A673 (cell line): ENCODE measurements at regions of chr15 and their contacts with region 1.

Region 1: GRCh38 chr15:52528991-52529926 is 579 bp upstream of the MYO5A start:
- DNase-seq: peak; percentile 74
- H3K4me3 ChIP-seq: peak overlapping the region; percentile 67
- H3K27ac ChIP-seq: no peak overlapping the region
- H3K4me1 ChIP-seq: peaks cover 4% of the 10 kb centered on the region
- H3K27me3 ChIP-seq: peaks cover 33% of the 10 kb centered on the region
- CTCF ChIP-seq: no peak

Region 2: DNA sequence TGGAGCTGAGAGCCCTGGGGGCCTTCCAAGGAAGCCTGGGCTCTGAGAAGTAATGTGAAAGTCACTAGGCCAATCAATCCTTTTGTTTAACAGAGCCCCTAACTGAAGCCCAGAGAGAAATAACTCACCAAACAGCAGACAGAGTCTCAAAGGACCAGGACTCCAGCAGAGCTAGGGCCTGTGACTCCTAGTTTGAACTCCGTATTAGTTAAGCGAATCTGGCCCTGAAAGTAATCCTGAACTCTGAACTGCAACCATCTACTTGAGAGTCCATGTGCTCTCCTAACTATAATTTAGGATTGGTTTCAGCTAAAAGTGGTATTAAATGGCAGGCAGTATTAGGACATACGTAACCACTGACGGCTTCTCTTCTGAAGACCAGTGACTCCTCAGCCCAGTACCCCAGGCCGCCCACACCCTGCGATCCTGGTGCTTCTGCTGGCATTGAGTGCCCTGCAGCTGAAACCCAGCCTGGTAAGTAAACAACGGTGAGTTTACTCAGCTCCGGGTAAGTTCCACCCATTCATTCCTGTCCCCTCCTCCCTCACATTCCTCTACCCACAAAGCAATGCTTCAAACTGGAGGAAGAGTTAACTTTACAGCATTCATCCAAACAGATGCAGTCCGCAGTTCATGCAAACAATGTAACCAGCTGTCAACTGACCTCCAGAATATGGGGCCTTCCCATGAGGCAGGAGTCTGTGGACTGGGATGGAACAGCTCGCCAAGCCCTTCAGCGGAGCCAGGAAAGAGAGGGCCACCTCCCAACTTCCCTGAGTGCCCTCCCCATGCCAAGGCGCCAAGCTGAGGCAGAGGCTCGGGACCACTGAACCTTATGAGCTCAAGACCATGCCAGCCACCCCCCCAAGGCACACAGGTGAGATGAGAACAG is 241.0 kb before region 1 on chr15:
- CTCF ChIA-PET with region 1: no interaction called
- POLR2A ChIA-PET with region 1: no interaction called
- intact Hi-C with region 1: no loop called
- DNase-seq: no peak
- H3K4me3 ChIP-seq: no peak overlapping the region
- H3K27ac ChIP-seq: no peak overlapping the region
- H3K4me1 ChIP-seq: no peaks in the 10 kb centered on the region
- H3K27me3 ChIP-seq: peaks cover 9% of the 10 kb centered on the region
- CTCF ChIP-seq: no peak

Region 3: GRCh38 chr15:52331490-52332240 is 197.6 kb before region 1 on chr15:
- CTCF ChIA-PET with region 1: no interaction called
- POLR2A ChIA-PET with region 1: no interaction called
- intact Hi-C with region 1: loop called (anchors 5 kb)
- DNase-seq: peak; percentile 52
- H3K4me3 ChIP-seq: no peak overlapping the region
- H3K27ac ChIP-seq: no peak overlapping the region
- H3K4me1 ChIP-seq: no peaks in the 10 kb centered on the region
- H3K27me3 ChIP-seq: no peaks in the 10 kb centered on the region
- CTCF ChIP-seq: peak; percentile 58

Region 4: DNA sequence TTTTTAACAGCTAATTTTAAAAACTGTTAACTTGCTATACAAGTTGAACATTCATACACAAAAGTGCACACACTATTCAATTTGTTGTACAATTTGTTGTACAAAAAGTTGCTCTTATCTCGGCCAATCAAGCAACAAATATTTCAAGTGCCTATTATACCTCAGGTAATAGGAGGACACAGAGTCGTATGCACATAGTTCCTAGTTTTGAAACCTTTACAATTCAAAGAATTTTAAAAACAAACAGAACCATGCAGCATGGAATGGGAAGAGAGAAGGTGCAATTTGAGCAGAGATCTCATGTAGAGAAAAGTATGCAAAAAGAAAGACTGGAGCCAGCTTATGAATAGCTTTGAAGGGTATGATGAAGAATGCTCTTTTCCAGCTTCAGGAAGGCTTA is 86.0 kb after region 1 on chr15:
- CTCF ChIA-PET with region 1: no interaction called
- POLR2A ChIA-PET with region 1: no interaction called
- intact Hi-C with region 1: no loop called
- DNase-seq: no peak
- H3K4me3 ChIP-seq: no peak overlapping the region
- H3K27ac ChIP-seq: no peak overlapping the region
- H3K4me1 ChIP-seq: no peaks in the 10 kb centered on the region
- H3K27me3 ChIP-seq: no peaks in the 10 kb centered on the region
- CTCF ChIP-seq: no peak

Region 5: GRCh38 chr15:52709190-52709981 is 180.1 kb after region 1 on chr15:
- CTCF ChIA-PET with region 1: no interaction called
- POLR2A ChIA-PET with region 1: no interaction called
- intact Hi-C with region 1: no loop called
- DNase-seq: peak; percentile 22
- H3K4me3 ChIP-seq: no peak overlapping the region
- H3K27ac ChIP-seq: no peak overlapping the region
- H3K4me1 ChIP-seq: no peaks in the 10 kb centered on the region
- H3K27me3 ChIP-seq: peaks cover 2% of the 10 kb centered on the region
- CTCF ChIP-seq: no peak

Region 6: GRCh38 chr15:52730173-52730572 is 200.9 kb after region 1 on chr15:
- CTCF ChIA-PET with region 1: no interaction called
- POLR2A ChIA-PET with region 1: no interaction called
- intact Hi-C with region 1: loop called (anchors 5 kb)
- DNase-seq: peak; percentile 58
- H3K4me3 ChIP-seq: no peak overlapping the region
- H3K27ac ChIP-seq: no peak overlapping the region
- H3K4me1 ChIP-seq: peaks cover 10% of the 10 kb centered on the region
- H3K27me3 ChIP-seq: no peaks in the 10 kb centered on the region
- CTCF ChIP-seq: peak; percentile 21; the same call in 1 of the 2 replicates